Dorsolateral prefrontal cortex (tissue), 120 donors: ENCODE measurements at regions of chr14 and their contacts with region 1.

Region 1: DNA sequence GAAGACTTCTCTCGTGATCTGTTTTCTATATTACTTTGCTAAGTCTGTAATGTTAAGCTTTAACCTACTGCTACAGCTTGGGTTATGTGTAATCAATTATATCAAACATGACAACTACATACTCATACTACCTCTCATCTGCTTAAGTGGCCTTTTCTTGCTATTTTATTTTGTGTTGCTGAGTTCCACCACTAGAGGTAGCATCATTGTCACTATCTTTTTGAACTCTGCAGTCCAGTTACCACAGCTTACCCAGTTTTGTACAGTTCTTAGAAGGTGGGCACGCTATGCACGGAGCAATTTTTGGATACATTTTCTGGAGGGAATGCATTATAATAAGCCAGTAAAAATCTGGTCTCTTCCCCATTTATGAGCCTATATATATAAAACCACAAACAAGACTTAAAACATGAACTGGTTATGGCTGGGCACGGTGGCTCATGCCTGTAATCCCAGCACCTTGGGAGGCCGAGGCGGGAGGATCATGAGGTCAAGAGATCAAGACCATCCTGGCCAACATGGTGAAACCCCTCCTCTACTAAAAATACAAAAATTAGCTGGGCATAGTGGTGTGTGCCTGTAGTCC is 48.5 kb downstream of the SAV1 start:
- DNase-seq: no peak
- H3K4me3 ChIP-seq: no peak overlapping the region
- H3K27ac ChIP-seq: peak overlapping the region in 55 of 59 donors; percentile 1 to 100 (median 92)
- H3K27me3 ChIP-seq: no peaks in the 10 kb centered on the region
- CTCF ChIP-seq: peak; percentile 45 to 79 (median 68)

Region 2: DNA sequence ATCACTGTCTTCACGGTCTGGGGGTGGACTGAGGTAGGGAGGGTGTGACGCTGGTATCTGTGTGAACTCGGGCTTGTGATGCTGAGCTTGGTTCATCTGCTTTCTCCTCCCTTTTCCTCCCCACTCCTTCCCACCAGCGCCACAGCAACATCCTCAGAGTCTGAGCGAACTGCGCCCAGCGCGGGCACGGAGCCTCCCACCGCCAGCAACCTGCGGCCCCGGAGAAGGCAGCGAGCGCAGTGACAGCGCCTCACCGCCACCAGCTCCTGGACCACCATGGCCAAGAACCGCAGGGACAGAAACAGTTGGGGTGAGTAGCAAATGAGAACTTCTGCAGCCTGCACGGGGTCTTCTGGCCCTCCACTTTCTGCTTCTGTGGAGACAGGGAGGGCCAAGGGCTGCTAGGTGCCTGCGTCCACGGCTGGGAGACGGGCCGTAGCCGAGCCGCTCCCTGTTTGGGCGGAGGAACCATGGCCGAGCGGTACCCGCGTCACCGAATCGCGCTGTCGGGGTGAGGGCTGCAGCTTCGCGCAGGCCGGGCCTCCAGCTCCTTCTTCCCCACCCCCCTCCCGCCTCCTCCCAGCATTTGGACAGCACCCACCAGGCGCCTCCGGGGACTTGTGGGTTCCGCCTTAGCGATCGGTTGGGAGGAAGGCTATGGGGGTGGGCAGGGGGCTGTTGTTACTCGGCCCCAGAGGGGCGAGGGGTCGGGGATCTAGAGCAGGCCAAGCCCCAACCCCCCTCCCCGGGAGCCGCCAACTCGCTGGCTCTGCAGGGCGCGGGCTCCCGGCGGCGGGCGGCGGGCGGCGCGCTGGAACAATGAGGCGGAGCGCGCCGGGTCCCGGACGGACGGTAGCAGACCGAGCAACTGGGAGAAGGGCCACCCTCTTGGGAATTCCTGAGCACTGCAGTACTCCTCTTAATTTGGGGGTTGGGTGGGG is 59.4 kb before region 1 on chr14 and contains the start of gene ATL1:
- intact Hi-C with region 1: loop called in 1 of 2 experiments (anchors 10 kb)
- DNase-seq: peak; percentile 58 to 87 (median 80)
- H3K4me3 ChIP-seq: peak within 1 kb of the TSS; percentile 54 to 94 (median 83)
- H3K27ac ChIP-seq: peak within 1 kb of the TSS; percentile 81 to 100 (median 98)
- H3K27me3 ChIP-seq: no peaks in the 10 kb centered on the region
- CTCF ChIP-seq: peak in 16 of 56 donors; percentile 2 to 36 (median 12)
- total RNA-seq, gene ATL1: 29.5 to 146 (median 100.0) TPM

Region 3: GRCh38 chr14:50667996-50668825 is 48.6 kb after region 1 on chr14 and contains the start of gene SAV1:
- intact Hi-C with region 1: loop called (anchors 5 to 10 kb)
- DNase-seq: peak; percentile 63 to 85 (median 75)
- H3K4me3 ChIP-seq: peak within 1 kb of the TSS; percentile 37 to 99 (median 88)
- H3K27ac ChIP-seq: peak within 1 kb of the TSS; percentile 78 to 99 (median 94)
- H3K27me3 ChIP-seq: no peaks in the 10 kb centered on the region
- CTCF ChIP-seq: peak in 40 of 56 donors; percentile 3 to 50 (median 20)
- total RNA-seq, gene SAV1: 17.4 to 41.1 (median 25.1) TPM

Region 4: DNA sequence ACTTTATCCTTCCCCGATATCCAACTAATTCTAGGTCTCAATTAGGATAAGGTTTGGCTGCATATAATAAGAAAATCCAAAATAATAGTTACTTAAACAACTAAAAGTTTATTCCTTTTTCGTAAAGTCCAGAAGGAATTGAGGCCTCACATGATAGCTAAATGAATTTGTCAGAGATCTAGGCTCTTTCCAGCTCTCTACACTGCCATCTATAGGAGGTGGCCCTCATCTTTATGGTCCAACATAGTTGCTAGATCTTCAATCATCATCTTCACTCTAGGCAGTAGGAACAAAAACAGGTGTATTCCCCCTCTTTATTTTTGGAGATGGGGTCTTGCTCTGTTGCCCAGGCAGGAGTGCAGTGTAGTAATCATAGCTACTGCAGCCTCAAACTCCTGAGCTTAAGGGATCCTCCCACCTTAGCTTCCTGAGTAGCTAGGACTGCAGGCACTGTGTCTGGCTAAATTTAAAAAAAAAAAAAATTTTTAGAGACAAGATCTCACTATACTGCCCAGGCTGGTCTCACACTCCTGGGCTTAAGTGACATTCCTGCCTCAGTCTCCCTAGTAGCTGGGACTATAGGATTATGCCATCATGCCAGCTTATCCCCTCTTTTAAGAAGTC is 94.9 kb after region 1 on chr14:
- intact Hi-C with region 1: loop called in 1 of 2 experiments (anchors 5 kb)
- DNase-seq: no peak
- H3K4me3 ChIP-seq: no peak overlapping the region
- H3K27ac ChIP-seq: peak overlapping the region in 1 of 59 donors; percentile 9
- H3K27me3 ChIP-seq: no peaks in the 10 kb centered on the region
- CTCF ChIP-seq: peak in 55 of 56 donors; percentile 29 to 79 (median 61)

Region 5: DNA sequence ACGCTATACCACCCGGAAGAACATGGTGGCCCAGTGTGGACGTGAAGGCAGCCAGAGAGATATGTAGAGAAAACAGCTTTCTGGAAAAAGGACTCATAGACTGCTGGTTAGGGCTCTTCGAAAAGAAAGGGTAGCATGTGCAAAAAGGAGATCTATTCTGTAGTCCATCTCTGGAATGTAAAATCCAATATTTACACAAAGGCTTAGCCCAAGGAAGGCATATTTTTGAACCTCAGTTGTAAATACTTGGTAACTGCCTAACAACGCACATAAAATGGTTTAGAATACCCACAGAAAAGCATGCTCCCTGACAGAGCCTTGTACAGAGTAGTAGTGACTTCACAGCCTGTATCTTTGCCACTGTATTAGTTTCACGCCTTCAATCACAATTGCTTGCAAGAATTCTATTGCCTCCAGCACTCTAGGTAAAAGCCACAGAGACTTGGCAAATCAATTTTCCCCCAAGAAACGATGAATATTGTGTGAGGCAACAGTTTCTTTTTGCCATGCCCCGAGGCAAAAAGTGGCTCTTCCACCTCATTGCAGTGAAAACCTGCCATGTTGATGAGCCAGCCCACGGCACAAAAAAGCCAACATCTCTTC is 416.1 kb after region 1 on chr14:
- intact Hi-C with region 1: no loop called
- DNase-seq: no peak
- H3K4me3 ChIP-seq: no peak overlapping the region
- H3K27ac ChIP-seq: peak overlapping the region in 4 of 59 donors; percentile 2 to 46 (median 34)
- H3K27me3 ChIP-seq: no peaks in the 10 kb centered on the region
- CTCF ChIP-seq: no peak